ENCODE measurements at regions of chr18 and their contacts with region 1.

Region 1: DNA sequence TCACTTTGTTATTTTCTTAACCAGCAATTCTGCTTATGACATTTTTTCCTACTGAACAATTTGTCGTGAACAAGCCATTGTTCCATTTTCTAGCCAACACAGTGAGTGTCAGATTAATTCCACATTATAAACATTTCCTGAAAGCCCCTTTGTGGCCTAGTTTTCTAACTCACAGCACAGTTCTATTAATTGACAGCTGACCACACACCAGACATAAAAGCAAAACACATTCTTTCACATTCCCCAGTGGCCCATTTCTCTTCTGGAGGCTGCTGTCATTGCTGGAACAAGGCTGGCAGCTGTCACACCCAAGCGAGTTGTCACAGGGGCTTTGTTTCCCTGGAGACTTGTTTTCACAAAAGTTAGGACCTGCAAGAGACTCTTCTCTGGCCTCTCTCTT is 50.7 kb downstream of the RNF152 start:
- DNase-seq: no peak
- ATAC-seq: no peak

Region 2: DNA sequence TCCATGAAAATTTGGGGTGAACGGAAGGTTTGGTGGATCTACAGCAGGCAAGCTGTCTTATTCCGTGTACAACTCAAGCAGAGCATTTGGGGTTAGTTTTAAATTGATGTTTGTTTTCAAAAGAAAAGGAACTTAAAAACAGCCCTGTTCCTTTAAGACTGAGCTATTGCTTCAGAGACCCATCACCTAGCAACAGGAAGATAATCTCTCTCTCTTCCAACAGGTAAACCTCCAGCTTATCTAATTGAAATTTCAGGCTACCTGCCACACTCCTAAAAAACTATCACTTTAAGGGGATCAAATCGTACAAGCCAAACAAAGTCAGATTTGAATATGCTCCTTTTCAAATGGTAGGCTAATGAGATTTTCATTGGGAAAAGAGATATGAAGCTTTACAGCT is 51.1 kb before region 1 on chr18:
- intact Hi-C with region 1: loop called in 1 of 2 experiments (anchors 5 kb)
- DNase-seq: no peak
- ATAC-seq: no peak